Aorta (tissue), 5 donors: ENCODE measurements at regions of chrX and their contacts with region 1.

Region 1: GRCh38 chrX:5898463-5898862 is 330.2 kb downstream of the NLGN4X start:
- DNase-seq: no peak
- ATAC-seq: no peak
- H3K4me3 ChIP-seq: no peak overlapping the region
- H3K27ac ChIP-seq: no peak overlapping the region
- H3K4me1 ChIP-seq: no peaks in the 10 kb centered on the region
- H3K27me3 ChIP-seq: no peaks in the 10 kb centered on the region

Region 2: GRCh38 chrX:5683996-5684395 is 214.5 kb before region 1 on chrX:
- intact Hi-C with region 1: no loop called
- DNase-seq: no peak
- ATAC-seq: no peak
- H3K4me3 ChIP-seq: no peak overlapping the region
- H3K27ac ChIP-seq: no peak overlapping the region
- H3K4me1 ChIP-seq: no peaks in the 10 kb centered on the region
- H3K27me3 ChIP-seq: no peaks in the 10 kb centered on the region

Region 3: DNA sequence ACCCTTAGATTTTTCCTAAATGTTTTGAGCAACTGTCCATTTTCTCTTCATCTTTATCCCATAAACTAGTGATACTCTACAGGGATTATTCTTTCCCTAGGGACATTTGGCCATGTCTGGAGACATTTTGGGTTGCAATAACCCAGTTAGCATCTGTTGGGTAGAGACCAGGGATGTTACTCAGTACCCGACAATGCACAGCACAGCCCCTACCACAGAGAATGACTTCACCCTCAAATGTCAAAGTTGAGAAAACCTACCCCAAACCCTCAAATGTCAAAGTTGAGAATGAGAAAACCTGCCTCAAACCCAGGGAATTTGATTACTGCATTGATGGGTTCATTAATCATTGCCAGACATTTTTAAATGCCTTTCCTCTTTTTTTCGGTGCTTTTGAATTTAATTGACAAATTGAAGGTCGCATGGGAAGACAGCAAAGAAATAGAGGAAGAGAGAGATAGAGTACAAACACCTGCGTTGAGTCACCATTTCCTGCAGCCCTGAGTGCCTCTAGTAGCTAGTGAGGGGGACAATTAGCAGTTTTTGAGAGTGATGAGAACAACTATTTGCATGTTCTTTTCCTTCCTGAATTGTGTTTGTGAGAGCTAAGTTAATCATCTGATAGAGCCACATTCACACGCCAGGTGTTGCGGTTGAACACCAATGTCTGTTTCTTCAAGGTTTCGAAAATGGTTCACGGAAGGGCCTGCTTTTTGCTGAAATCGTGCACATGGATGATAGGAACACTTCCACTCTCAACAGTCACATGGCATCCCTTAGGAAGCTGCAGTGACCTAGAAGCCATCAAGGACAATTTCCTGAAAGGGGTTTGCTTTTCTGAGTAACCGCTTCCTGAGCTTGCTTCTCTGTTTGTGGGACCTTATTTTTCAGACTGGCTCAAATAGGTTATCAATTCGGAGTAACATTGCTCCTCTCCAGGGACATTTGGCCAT is 840.3 kb after region 1 on chrX:
- intact Hi-C with region 1: loop called in 1 of 2 experiments (anchors 10 kb)
- DNase-seq: no peak
- ATAC-seq: no peak
- H3K4me3 ChIP-seq: no peak overlapping the region
- H3K27ac ChIP-seq: no peak overlapping the region
- H3K4me1 ChIP-seq: no peaks in the 10 kb centered on the region
- H3K27me3 ChIP-seq: no peaks in the 10 kb centered on the region